Activated CD8-positive, alpha-beta T cell treated with anti-CD3 and anti-CD28 coated beads for 36 hours (primary cell): ENCODE measurements at regions of chr5 and their contacts with region 1.

Region 1: DNA sequence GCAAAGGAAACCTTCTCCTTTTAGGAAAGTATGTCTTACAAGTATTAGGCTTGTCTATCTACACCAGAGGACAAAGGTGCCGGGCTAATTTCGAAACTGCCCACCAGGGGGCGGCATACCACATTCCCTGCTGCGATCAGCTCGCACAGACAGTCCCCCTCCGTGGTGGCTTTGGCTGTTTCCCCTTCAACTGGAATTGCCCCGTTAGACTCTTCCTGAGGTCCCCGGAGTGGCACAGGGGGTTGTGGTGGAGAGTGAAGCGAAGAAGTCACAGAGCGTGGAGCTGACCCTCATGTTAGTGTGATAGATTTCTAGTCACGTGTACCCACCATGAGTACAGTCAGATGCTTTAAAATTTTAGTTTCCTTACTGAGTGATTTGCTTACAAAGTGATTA is 17.5 kb downstream of the PTTG1 start:
- DNase-seq: peak; percentile 95
- ATAC-seq: peak; percentile 78
- H3K4me3 Mint-ChIP-seq: peak overlapping the region; percentile 78
- H3K27ac Mint-ChIP-seq: peak overlapping the region; percentile 99
- H3K4me1 Mint-ChIP-seq: peaks cover 61% of the 10 kb centered on the region
- H3K27me3 Mint-ChIP-seq: peaks cover 5% of the 10 kb centered on the region
- CTCF ChIP-seq: peak; percentile 84

Region 2: GRCh38 chr5:160044967-160045366 is 394.2 kb before region 1 on chr5:
- CTCF ChIA-PET with region 1: no interaction called
- POLR2A ChIA-PET with region 1: no interaction called
- intact Hi-C with region 1: no loop called
- DNase-seq: no peak
- ATAC-seq: no peak
- H3K4me3 Mint-ChIP-seq: no peak overlapping the region
- H3K27ac Mint-ChIP-seq: no peak overlapping the region
- H3K4me1 Mint-ChIP-seq: no peaks in the 10 kb centered on the region
- H3K27me3 Mint-ChIP-seq: no peaks in the 10 kb centered on the region
- CTCF ChIP-seq: no peak

Region 3: GRCh38 chr5:160418561-160419457 is 20.4 kb before region 1 on chr5 and contains the start of gene SLU7:
- CTCF ChIA-PET with region 1: interaction called, 107 read pairs
- POLR2A ChIA-PET with region 1: interaction called, 7 read pairs
- intact Hi-C with region 1: no loop called
- DNase-seq: peak; percentile 97
- ATAC-seq: peak; percentile 87
- H3K4me3 Mint-ChIP-seq: peak within 1 kb of the TSS; percentile 88
- H3K27ac Mint-ChIP-seq: peak within 1 kb of the TSS; percentile 93
- H3K4me1 Mint-ChIP-seq: peaks cover 50% of the 10 kb centered on the region
- H3K27me3 Mint-ChIP-seq: no peaks in the 10 kb centered on the region
- CTCF ChIP-seq: no peak
- total RNA-seq, gene SLU7: 38.4 to 40.9 TPM

Region 4: DNA sequence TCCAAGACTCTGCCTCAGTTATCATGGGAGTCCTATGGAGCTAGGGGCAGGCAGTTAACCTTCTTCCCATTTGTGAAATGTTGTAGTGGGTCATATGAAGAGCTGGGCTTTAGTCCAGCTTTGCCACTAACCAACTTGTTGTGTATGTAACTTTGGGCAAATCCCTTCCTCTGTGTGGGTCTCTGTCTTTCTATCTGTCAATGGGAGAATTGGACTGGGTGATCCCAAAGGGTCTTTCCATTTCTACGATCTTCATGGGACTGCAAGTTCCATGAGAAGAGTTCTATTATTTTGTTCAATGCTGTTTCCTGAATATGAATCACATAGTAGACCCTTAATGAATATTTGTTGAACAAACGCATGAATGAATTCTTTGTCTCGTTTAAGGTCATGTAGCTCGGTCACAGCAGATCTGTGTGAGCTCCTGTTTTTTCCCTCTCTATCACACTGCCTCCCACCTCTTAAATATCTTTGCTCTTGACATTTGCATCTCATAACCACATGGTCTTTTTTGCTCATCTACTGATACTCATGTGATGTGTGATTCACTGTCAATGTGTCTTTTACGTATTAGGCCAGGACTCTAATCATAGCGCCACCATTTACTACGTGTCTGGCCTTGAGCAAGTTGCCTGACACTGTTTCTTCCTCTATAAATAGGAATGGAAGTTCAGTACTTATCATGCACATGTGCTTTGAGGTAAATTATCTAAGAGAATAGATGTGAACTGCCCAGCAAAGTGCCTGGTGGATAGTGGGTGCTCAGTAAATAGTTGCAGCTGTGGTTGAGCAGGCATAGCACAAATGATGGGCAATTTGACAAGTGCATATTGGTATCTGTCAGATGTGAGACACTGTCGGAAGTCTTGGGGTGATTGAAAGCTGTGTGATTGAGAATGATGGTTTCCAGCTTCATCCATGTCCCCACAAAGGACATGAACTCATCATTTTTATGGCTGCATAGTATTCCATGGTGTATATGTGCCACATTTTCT is 19.9 kb after region 1 on chr5:
- CTCF ChIA-PET with region 1: interaction called, 195 read pairs
- POLR2A ChIA-PET with region 1: interaction called, 11 read pairs
- intact Hi-C with region 1: no loop called
- DNase-seq: peak; percentile 44
- ATAC-seq: peak; percentile 88
- H3K4me3 Mint-ChIP-seq: no peak overlapping the region
- H3K27ac Mint-ChIP-seq: peak overlapping the region; percentile 85
- H3K4me1 Mint-ChIP-seq: peaks cover 50% of the 10 kb centered on the region
- H3K27me3 Mint-ChIP-seq: no peaks in the 10 kb centered on the region
- CTCF ChIP-seq: no peak

Region 5: DNA sequence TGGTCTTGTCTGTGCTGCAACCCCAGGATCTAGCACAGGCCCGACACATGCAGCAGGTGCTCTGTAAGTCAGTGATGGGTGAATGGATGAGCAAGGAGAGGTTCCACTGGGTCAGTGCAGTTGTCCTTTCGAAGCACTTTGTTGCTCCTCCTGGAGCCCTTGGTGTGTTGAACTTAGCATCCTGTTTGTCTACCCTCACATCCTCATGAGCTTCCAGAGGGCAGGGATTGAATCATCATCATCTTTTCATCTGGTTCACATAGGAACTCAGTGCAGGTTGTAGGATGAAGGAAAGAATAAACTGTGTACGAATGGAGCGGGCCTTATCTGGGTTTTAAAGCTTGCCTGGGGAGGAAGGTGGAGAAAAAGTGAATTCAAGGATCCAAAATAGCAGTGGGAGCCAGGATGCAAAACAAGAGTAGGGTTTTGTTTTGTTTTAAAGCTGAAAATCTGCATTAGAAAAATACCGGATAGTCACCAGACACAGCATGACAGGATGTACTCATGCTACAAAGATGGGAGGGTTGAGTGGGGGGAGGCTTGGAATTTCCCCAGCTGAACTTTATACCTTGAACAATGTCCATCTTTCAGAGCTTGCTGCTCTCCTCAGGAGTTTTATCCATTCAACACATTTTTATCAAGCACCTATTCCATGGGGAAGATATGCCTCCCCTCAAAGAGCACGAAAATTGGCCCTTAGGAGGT is 38.2 kb after region 1 on chr5:
- CTCF ChIA-PET with region 1: interaction called, 35 read pairs
- POLR2A ChIA-PET with region 1: interaction called, 3 read pairs
- intact Hi-C with region 1: no loop called
- DNase-seq: no peak
- ATAC-seq: no peak
- H3K4me3 Mint-ChIP-seq: peak overlapping the region; percentile 21
- H3K27ac Mint-ChIP-seq: peak overlapping the region; percentile 59
- H3K4me1 Mint-ChIP-seq: peaks cover 54% of the 10 kb centered on the region
- H3K27me3 Mint-ChIP-seq: no peaks in the 10 kb centered on the region
- CTCF ChIP-seq: no peak

Region 6: GRCh38 chr5:160508780-160509361 is 69.7 kb after region 1 on chr5:
- CTCF ChIA-PET with region 1: interaction called, 156 read pairs
- POLR2A ChIA-PET with region 1: interaction called, 12 read pairs
- intact Hi-C with region 1: loop called (anchors 2 kb)
- DNase-seq: peak; percentile 69
- ATAC-seq: peak; percentile 88
- H3K4me3 Mint-ChIP-seq: no peak overlapping the region
- H3K27ac Mint-ChIP-seq: peak overlapping the region; percentile 53
- H3K4me1 Mint-ChIP-seq: peaks cover 33% of the 10 kb centered on the region
- H3K27me3 Mint-ChIP-seq: peaks cover 1% of the 10 kb centered on the region
- CTCF ChIP-seq: peak; percentile 73

Region 7: GRCh38 chr5:160787240-160787639 is 348.0 kb after region 1 on chr5:
- CTCF ChIA-PET with region 1: interaction called, 10 read pairs
- POLR2A ChIA-PET with region 1: no interaction called
- intact Hi-C with region 1: loop called (anchors 5 kb)
- DNase-seq: peak; percentile 37
- ATAC-seq: no peak
- H3K4me3 Mint-ChIP-seq: no peak overlapping the region
- H3K27ac Mint-ChIP-seq: no peak overlapping the region
- H3K4me1 Mint-ChIP-seq: no peaks in the 10 kb centered on the region
- H3K27me3 Mint-ChIP-seq: no peaks in the 10 kb centered on the region
- CTCF ChIP-seq: no peak